ENCODE measurements at regions of chr3 and their contacts with region 1.

Region 1: DNA sequence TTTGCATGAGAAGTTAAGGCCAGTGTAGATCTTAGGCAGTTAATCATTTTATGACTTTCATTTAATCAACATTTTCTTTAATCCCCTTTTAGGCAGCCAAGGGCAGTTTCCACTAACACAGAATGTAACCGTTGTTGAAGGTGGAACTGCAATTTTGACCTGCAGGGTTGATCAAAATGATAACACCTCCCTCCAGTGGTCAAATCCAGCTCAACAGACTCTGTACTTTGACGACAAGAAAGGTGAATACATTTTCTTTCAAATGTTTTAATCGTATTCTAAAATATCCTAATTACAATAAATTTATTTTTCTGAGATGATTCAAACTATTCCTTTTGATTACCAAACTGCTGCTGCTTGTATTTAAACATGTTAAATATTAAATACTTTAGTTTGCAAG is 843.2 kb downstream of the CADM2 start:
- DNase-seq: peak; percentile 41
- H3K4me3 Mint-ChIP-seq: no peak overlapping the region
- H3K27ac Mint-ChIP-seq: no peak overlapping the region
- H3K4me1 Mint-ChIP-seq: no peaks in the 10 kb centered on the region
- H3K27me3 Mint-ChIP-seq: no peaks in the 10 kb centered on the region
- CTCF ChIP-seq: peak; percentile 20

Region 2: GRCh38 chr3:84974347-84974746 is 827.6 kb before region 1 on chr3:
- CTCF ChIA-PET with region 1: no interaction called
- intact Hi-C with region 1: loop called (anchors 10 kb)
- DNase-seq: no peak
- H3K4me3 Mint-ChIP-seq: no peak overlapping the region
- H3K27ac Mint-ChIP-seq: no peak overlapping the region
- H3K4me1 Mint-ChIP-seq: no peaks in the 10 kb centered on the region
- H3K27me3 Mint-ChIP-seq: no peaks in the 10 kb centered on the region
- CTCF ChIP-seq: no peak

Region 3: GRCh38 chr3:85304359-85304964 is 497.5 kb before region 1 on chr3:
- CTCF ChIA-PET with region 1: no interaction called
- intact Hi-C with region 1: loop called (anchors 5 kb)
- DNase-seq: no peak
- H3K4me3 Mint-ChIP-seq: no peak overlapping the region
- H3K27ac Mint-ChIP-seq: no peak overlapping the region
- H3K4me1 Mint-ChIP-seq: no peaks in the 10 kb centered on the region
- H3K27me3 Mint-ChIP-seq: no peaks in the 10 kb centered on the region
- CTCF ChIP-seq: peak; percentile 45